ENCODE measurements at regions of chr10 and their contacts with region 1.

Region 1: DNA sequence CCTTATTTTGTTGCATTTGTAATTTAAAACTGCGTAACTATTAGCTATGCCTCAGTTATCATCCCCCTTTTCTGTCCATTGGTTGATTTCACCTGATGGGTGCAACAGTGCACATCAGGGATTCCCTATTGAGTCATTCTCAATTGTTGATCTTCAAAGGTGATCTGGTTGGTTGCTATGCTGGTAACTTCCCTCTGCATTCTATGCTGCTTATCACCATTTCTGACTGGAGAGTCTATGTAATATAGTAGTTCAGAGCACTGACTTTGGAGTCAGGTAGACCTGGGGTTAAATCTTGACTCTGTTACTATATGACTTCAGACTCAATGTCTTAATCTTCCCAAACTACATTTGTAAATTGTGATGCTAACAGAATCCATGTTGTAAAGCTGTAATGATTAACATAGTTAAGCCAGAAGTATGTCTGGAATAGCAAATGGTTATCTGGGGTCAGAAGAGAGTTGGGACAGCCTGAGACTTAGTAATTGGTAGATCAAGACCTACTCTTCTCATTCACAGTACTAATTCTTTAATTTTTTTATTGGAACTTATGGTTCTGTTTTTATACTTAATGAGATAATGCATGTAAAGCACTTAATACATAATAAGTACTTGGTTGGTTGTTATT is 38.1 kb downstream of the EXOC6 start:
- DNase-seq: no peak
- CTCF ChIP-seq: no peak

Region 2: DNA sequence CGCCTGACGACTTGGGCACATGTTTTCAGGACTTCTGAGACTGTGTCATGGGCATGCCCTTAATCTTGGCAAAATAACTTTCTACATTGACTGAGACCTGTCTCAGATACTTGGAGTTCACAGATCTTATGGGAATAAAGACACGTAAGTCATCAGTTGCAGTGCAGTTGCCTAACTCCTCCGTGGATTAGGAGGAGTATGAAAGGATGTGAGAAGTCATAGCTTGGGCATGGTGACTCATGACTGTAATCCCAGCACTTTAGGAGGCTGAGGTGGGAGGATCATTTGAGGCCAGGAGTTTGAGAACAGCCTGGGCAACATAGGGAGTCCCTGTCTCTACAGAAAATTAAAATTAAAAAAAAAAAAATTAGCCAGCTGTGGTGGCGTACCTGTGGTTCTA is 11.5 kb after region 1 on chr10:
- CTCF ChIA-PET with region 1: interaction called, 11 read pairs
- POLR2A ChIA-PET with region 1: no interaction called
- DNase-seq: no peak
- CTCF ChIP-seq: no peak

Region 3: GRCh38 chr10:92918603-92919002 is 32.2 kb after region 1 on chr10:
- CTCF ChIA-PET with region 1: no interaction called
- POLR2A ChIA-PET with region 1: no interaction called
- DNase-seq: no peak
- CTCF ChIP-seq: no peak

Region 4: DNA sequence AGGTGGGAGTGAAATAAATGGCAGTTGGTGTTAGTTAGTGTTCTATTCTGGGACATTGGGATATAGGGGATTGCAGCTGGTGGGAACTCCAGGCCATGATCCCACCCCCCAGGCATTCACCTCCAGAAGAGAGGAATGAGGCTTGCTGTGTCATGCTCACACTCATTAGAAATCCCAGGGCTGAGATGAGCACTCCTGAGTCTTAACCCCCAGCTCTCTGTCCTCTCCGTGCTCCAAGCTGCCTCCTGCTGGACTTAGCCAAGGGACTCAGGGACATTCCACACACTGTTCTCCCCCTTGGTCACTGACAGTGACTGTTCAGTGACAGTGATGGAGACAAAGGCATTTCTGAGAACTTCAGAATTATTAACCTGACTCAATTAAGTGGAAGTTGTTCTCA is 208.8 kb after region 1 on chr10:
- CTCF ChIA-PET with region 1: no interaction called
- POLR2A ChIA-PET with region 1: no interaction called
- DNase-seq: no peak
- CTCF ChIP-seq: no peak

Region 5: DNA sequence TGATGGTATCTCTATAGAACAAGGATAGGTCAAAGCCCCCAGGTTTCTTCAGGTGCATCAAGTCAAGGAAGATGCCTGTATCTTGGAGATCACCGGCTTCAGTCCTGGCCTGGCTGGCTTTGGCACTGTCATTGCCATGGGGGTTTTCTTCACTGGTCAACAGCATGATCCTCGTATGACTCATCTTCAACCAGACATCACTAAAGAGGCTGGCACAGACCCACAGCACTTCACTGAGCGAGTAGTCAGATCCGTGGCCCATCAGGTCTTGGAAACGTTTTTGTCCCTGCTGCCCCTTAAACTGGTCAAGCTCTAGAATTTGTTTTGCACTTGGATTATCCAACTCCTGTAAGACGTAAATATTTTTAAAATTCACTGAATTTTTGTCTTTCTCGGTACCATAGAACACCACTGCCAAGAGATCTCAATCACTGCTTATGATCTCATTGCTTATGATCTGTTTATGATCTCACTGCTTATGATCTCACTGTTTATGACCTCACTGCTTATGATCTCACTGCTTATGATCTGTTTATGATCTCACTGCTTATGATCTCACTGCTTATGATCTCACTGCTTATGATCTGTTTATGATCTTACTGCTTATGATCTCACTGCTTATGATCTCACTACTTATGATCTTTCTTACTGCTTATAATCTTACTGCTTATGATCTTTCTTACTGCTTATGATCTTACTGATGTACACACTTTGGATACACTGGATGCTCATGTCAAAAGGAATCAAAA is 322.4 kb after region 1 on chr10:
- CTCF ChIA-PET with region 1: no interaction called
- POLR2A ChIA-PET with region 1: no interaction called
- DNase-seq: no peak
- CTCF ChIP-seq: no peak

Measured in GM10248 (cell line).